Mammary epithelial cell (primary cell): ENCODE measurements at regions of chr10 and their contacts with region 1.

Region 1: GRCh38 chr10:90418869-90419652 is 438.8 kb downstream of the HTR7 start:
- DNase-seq: peak; percentile 91
- H3K4me3 ChIP-seq: no peak overlapping the region
- H3K27ac ChIP-seq: peak overlapping the region; percentile 94
- H3K4me1 ChIP-seq: peaks cover 45% of the 10 kb centered on the region
- H3K27me3 ChIP-seq: no peaks in the 10 kb centered on the region
- CTCF ChIP-seq: no peak

Region 2: DNA sequence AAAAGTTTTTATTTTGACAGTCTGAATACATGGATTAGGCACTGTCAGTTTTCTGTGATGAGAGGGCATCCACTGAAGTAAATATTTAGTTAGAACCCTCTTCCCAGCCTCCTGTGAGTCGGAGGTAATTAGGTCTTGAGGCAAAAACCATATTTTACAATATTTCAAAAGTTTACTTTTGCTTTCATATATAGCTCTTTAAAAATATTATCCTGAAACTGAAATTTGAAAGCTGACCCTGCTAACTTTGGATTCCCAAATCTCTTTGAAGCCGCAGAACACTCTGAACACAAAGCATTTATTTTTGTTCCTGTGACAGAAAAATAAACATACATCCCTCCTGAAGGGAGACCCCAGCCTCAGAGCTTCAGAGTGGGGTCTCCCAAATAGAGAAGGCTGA is 400.2 kb before region 1 on chr10:
- CTCF ChIA-PET with region 1: no interaction called
- dilution Hi-C with region 1: no loop called
- in situ Hi-C with region 1: no loop called
- intact Hi-C with region 1: loop called (anchors 5 kb)
- DNase-seq: no peak
- H3K4me3 ChIP-seq: no peak overlapping the region
- H3K27ac ChIP-seq: no peak overlapping the region
- H3K4me1 ChIP-seq: no peaks in the 10 kb centered on the region
- H3K27me3 ChIP-seq: no peaks in the 10 kb centered on the region
- CTCF ChIP-seq: no peak

Region 3: DNA sequence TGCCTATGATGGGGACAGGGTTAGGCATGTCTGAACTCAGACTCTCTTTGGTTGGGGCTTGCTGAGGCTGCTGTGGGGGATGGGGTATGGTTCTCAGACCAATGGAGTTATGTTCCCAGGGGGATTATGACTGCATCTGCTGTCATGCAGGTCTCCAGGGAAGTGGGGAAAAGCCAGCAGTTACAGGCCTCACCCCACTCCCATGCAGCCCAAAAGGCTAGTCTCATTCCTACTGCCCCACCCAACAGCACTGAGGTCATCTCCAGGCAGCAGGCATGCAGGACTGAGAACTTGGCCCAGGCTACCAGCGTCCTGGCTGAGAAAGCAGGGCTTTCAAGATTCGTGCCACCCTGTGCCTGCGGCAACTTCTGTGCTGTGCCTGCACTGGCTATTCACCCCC is 65.5 kb after region 1 on chr10:
- CTCF ChIA-PET with region 1: no interaction called
- dilution Hi-C with region 1: no loop called
- in situ Hi-C with region 1: no loop called
- intact Hi-C with region 1: loop called (anchors 2 kb)
- DNase-seq: peak; percentile 86
- H3K4me3 ChIP-seq: no peak overlapping the region
- H3K27ac ChIP-seq: peak overlapping the region; percentile 77
- H3K4me1 ChIP-seq: peaks cover 14% of the 10 kb centered on the region
- H3K27me3 ChIP-seq: no peaks in the 10 kb centered on the region
- CTCF ChIP-seq: no peak